ENCODE measurements at regions of chr3 and their contacts with region 1.

Region 1: DNA sequence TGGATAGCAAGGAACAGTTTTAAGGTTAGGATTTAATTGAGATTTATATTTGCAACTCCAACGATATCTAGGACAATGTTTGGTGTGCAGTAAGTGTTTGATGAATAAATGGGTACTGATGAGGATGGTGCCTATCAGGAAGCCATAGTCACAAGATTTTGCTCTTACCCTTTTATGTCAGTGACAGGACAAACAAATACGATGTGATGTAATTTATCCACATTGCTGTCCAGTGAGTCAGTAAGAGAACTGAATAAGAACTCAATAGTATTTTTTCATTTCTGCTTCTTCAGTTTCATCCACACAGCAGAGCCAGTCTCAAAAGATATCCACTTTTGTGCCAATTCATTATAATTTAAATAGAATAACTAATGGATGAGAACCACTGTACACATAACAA is 18.5 kb downstream of the C3orf85 start:
- DNase-seq: no peak
- H3K4me3 Mint-ChIP-seq: no peak overlapping the region
- H3K27ac Mint-ChIP-seq: no peak overlapping the region
- H3K4me1 Mint-ChIP-seq: peaks cover 8% of the 10 kb centered on the region
- H3K27me3 Mint-ChIP-seq: no peaks in the 10 kb centered on the region
- CTCF ChIP-seq: no peak

Region 2: DNA sequence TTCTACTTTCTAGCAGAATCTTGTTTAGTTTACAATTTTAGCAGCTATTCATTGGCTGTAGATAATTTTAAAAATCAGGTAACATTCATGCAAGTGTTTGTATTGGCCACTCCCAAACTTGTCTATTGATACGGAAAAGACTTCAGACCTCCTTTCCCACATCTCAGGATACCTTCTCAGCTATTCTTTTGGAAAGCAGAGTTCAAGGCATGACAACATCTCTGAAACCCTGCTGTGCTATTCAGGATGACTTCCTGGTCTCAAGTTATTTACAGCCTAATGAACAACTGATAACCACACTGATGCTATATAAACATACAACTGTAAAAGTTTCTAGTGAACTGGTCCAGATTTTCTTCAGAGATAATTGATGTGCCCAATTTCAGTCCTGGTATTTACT is 509.6 kb before region 1 on chr3:
- CTCF ChIA-PET with region 1: interaction called, 13 read pairs
- intact Hi-C with region 1: no loop called
- DNase-seq: no peak
- H3K4me3 Mint-ChIP-seq: no peak overlapping the region
- H3K27ac Mint-ChIP-seq: no peak overlapping the region
- H3K4me1 Mint-ChIP-seq: no peaks in the 10 kb centered on the region
- H3K27me3 Mint-ChIP-seq: no peaks in the 10 kb centered on the region
- CTCF ChIP-seq: no peak

Region 3: GRCh38 chr3:109718850-109719249 is 563.9 kb after region 1 on chr3:
- CTCF ChIA-PET with region 1: no interaction called
- intact Hi-C with region 1: no loop called
- DNase-seq: no peak
- H3K4me3 Mint-ChIP-seq: no peak overlapping the region
- H3K27ac Mint-ChIP-seq: no peak overlapping the region
- H3K4me1 Mint-ChIP-seq: peaks cover 6% of the 10 kb centered on the region
- H3K27me3 Mint-ChIP-seq: no peaks in the 10 kb centered on the region
- CTCF ChIP-seq: no peak